ENCODE measurements at regions of chr3 and their contacts with region 1.

Region 1: DNA sequence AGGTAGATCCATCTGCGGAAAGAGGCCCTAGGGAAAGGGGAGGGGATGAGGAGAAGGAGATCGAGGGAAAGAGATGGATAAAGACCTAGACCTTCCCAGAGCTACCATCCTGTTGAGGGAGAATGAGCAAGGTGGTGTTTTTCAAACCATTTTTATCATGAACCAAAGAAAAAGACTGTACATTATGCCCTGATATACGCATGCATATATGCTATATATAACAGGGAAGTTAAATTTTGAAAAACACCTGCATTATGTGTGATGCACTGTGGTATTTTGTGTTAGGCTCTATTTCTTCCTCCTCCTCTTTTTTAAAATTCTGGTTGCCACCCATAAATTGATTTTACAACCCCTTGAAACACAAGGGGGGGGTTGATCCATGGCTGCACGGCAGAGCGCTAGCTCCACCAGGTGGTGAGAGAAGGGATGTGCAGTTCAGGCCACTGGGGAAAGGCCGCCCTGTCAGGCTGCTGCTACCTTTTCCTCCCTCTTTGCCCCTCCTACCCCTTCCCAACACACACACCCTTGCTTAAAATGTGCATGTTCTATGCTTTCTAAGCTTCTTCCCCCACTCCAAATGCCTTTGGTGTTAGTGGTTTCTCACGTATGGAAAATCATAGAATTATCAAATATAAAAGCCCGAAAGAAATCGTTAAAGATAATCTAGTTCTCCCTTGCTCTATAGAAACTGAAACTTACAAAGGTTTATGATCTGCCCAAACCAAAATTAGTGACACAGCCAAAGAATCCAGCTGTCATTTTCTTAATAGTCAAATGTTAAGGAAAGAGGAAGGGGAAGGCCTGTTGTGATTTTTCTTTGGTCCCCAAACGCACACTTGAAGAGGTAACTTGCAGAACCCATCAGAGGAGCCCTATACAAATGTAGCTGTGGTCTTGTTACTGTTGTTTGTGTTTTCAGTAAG is 262.0 kb upstream of the UMPS start:
- DNase-seq: peak; percentile 78
- H3K4me3 ChIP-seq: no peak overlapping the region; a peak in 1 of 4 replicates
- H3K27ac ChIP-seq: peak overlapping the region in 1 of 2 experiments; percentile 47; a peak in 1 of 4 replicates
- H3K4me1 ChIP-seq: peaks cover 0 to 10% of the 10 kb centered on the region in 2 experiments; a peak in 2 of 4 replicates
- H3K27me3 ChIP-seq: no peaks in the 10 kb centered on the region
- CTCF ChIP-seq: peak; percentile 99
- EP300 ChIP-seq: no peak
- RAD21 ChIP-seq: peak; percentile 99

Region 2: DNA sequence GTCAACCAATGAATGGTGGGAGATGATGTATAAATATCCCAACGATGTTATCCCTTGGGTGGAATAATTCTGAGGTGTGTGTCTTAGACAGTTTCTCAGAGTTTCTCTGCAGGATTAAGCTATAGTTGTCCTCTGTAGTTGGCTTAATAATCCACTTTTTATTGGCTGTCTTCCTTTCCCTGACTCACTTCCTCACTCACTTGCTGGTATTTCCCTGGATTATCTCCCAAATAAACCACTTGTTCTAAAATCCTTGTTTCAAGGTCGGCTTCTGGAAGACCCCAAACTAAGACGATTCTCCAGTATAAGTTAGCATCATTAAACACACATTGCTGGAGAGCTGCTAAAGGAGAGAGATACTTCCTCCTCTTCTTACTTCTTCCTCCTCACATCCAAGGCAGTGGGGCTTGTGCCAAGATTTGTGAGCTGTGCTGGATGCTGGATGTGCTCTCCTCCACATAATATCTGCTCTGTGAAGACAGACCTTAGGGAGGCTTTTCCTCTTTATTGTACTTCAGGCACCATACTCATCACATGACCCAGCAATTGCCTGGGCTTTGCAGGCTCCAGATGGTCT is 453.8 kb before region 1 on chr3:
- CTCF ChIA-PET with region 1: interaction called, 20 read pairs
- POLR2A ChIA-PET with region 1: no interaction called
- DNase-seq: no peak
- H3K4me3 ChIP-seq: no peak overlapping the region
- H3K27ac ChIP-seq: no peak overlapping the region
- H3K4me1 ChIP-seq: peaks cover 0 to 5% of the 10 kb centered on the region in 2 experiments; a peak in 1 of 4 replicates
- H3K27me3 ChIP-seq: no peaks in the 10 kb centered on the region
- CTCF ChIP-seq: no peak
- EP300 ChIP-seq: no peak
- RAD21 ChIP-seq: no peak

Region 3: GRCh38 chr3:124246949-124247348 is 221.3 kb before region 1 on chr3:
- CTCF ChIA-PET with region 1: no interaction called
- POLR2A ChIA-PET with region 1: no interaction called
- DNase-seq: no peak
- H3K4me3 ChIP-seq: no peak overlapping the region
- H3K27ac ChIP-seq: peak overlapping the region in 1 of 2 experiments; percentile 97; a peak in 3 of 4 replicates
- H3K4me1 ChIP-seq: peaks cover 18 to 30% of the 10 kb centered on the region in 2 experiments
- H3K27me3 ChIP-seq: no peaks in the 10 kb centered on the region
- CTCF ChIP-seq: peak; percentile 49
- EP300 ChIP-seq: no peak
- RAD21 ChIP-seq: peak; percentile 57

Region 4: GRCh38 chr3:124281453-124282316 is 186.6 kb before region 1 on chr3:
- CTCF ChIA-PET with region 1: interaction called, 26 read pairs
- POLR2A ChIA-PET with region 1: no interaction called
- DNase-seq: peak; percentile 47
- H3K4me3 ChIP-seq: no peak overlapping the region
- H3K27ac ChIP-seq: peak overlapping the region in 1 of 2 experiments; percentile 100; a peak in 3 of 4 replicates
- H3K4me1 ChIP-seq: peaks cover 5 to 52% of the 10 kb centered on the region in 2 experiments; a peak in 2 of 4 replicates
- H3K27me3 ChIP-seq: no peaks in the 10 kb centered on the region
- CTCF ChIP-seq: peak; percentile 74
- EP300 ChIP-seq: no peak
- RAD21 ChIP-seq: peak; percentile 94

Region 5: GRCh38 chr3:124360563-124360962 is 107.7 kb before region 1 on chr3:
- CTCF ChIA-PET with region 1: interaction called, 165 read pairs
- POLR2A ChIA-PET with region 1: no interaction called
- DNase-seq: no peak
- H3K4me3 ChIP-seq: no peak overlapping the region
- H3K27ac ChIP-seq: peak overlapping the region in 1 of 2 experiments; percentile 34; a peak in 2 of 4 replicates
- H3K4me1 ChIP-seq: peaks cover 19 to 29% of the 10 kb centered on the region in 2 experiments; a peak in 3 of 4 replicates
- H3K27me3 ChIP-seq: no peaks in the 10 kb centered on the region
- CTCF ChIP-seq: no peak
- EP300 ChIP-seq: no peak
- RAD21 ChIP-seq: no peak

Region 6: GRCh38 chr3:124456506-124456905 is 11.7 kb before region 1 on chr3:
- CTCF ChIA-PET with region 1: interaction called, 25 read pairs
- POLR2A ChIA-PET with region 1: no interaction called
- DNase-seq: no peak
- H3K4me3 ChIP-seq: no peak overlapping the region
- H3K27ac ChIP-seq: peak overlapping the region in 1 of 2 experiments; percentile 77; a peak in 2 of 4 replicates
- H3K4me1 ChIP-seq: peaks cover 0 to 5% of the 10 kb centered on the region in 2 experiments; a peak in 2 of 4 replicates
- H3K27me3 ChIP-seq: no peaks in the 10 kb centered on the region
- CTCF ChIP-seq: no peak
- EP300 ChIP-seq: no peak
- RAD21 ChIP-seq: no peak

Region 7: DNA sequence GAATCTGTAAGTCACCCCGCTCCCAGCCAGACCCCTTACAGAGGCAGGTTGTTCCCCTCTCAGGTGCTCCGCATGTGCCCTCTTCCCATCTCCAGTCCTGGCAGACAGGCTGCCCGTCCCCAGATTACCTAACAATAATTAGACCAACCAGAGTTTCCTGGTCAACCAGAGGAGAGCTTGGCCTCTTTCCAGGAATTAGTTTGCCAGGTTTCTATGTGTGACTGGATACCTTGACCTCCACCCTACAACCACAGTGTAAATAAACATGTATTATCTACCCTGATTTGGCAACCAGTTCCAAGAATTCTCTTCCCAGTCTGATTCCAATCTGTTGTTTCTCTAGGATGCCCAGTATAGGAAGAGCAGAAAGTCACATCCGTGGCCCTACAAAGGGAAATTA is 84.0 kb after region 1 on chr3:
- CTCF ChIA-PET with region 1: interaction called, 13 read pairs
- POLR2A ChIA-PET with region 1: no interaction called
- DNase-seq: no peak
- H3K4me3 ChIP-seq: no peak overlapping the region
- H3K27ac ChIP-seq: peak overlapping the region in 1 of 2 experiments; percentile 29; a peak in 1 of 4 replicates
- H3K4me1 ChIP-seq: peaks cover 4 to 27% of the 10 kb centered on the region in 2 experiments; a peak in 3 of 4 replicates
- H3K27me3 ChIP-seq: no peaks in the 10 kb centered on the region
- CTCF ChIP-seq: no peak
- EP300 ChIP-seq: no peak
- RAD21 ChIP-seq: no peak

Region 8: GRCh38 chr3:124786441-124787241 is 318.4 kb after region 1 on chr3:
- CTCF ChIA-PET with region 1: no interaction called
- POLR2A ChIA-PET with region 1: no interaction called
- DNase-seq: no peak
- H3K4me3 ChIP-seq: no peak overlapping the region
- H3K27ac ChIP-seq: peak overlapping the region; percentile 47 to 83; a peak in 3 of 4 replicates
- H3K4me1 ChIP-seq: peaks cover 21 to 33% of the 10 kb centered on the region in 2 experiments
- H3K27me3 ChIP-seq: no peaks in the 10 kb centered on the region
- CTCF ChIP-seq: peak; percentile 66
- EP300 ChIP-seq: no peak
- RAD21 ChIP-seq: peak; percentile 63